Calu3 (cell line): ENCODE measurements at regions of chr6 and their contacts with region 1.

Region 1: GRCh38 chr6:35452186-35453090 is at the start of gene FANCE:
- DNase-seq: peak; percentile 99
- H3K4me3 Mint-ChIP-seq: peak within 1 kb of the TSS; percentile 79
- H3K27ac Mint-ChIP-seq: no peak within 1 kb of the TSS
- H3K4me1 Mint-ChIP-seq: peaks cover 26% of the 10 kb centered on the region
- H3K27me3 Mint-ChIP-seq: peaks cover 27% of the 10 kb centered on the region
- CTCF ChIP-seq: no peak
- total RNA-seq, gene FANCE: 10.4 and 10.9 TPM in 2 replicates

Region 2: DNA sequence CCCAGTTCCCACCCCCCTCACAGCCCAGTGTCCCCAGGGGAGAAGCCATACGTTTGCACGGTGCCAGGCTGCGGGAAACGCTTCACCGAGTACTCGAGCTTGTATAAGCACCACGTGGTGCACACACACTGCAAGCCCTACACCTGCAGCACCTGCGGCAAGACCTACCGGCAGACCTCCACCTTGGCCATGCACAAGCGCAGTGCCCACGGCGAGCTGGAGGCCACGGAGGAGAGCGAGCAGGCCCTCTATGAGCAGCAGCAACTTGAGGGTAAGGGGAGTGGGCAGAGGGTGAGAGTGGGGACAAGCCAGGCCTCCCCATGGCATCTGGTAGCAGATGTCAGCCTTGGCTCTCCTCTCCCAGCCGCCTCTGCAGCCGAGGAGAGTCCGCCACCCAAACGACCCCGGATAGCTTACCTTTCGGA is 159.9 kb before region 1 on chr6:
- CTCF ChIA-PET with region 1: interaction called, 13 read pairs
- intact Hi-C with region 1: loop called (anchors 1 kb)
- DNase-seq: no peak
- H3K4me3 Mint-ChIP-seq: no peak overlapping the region
- H3K27ac Mint-ChIP-seq: no peak overlapping the region
- H3K4me1 Mint-ChIP-seq: no peaks in the 10 kb centered on the region
- H3K27me3 Mint-ChIP-seq: no peaks in the 10 kb centered on the region
- CTCF ChIP-seq: no peak

Region 3: DNA sequence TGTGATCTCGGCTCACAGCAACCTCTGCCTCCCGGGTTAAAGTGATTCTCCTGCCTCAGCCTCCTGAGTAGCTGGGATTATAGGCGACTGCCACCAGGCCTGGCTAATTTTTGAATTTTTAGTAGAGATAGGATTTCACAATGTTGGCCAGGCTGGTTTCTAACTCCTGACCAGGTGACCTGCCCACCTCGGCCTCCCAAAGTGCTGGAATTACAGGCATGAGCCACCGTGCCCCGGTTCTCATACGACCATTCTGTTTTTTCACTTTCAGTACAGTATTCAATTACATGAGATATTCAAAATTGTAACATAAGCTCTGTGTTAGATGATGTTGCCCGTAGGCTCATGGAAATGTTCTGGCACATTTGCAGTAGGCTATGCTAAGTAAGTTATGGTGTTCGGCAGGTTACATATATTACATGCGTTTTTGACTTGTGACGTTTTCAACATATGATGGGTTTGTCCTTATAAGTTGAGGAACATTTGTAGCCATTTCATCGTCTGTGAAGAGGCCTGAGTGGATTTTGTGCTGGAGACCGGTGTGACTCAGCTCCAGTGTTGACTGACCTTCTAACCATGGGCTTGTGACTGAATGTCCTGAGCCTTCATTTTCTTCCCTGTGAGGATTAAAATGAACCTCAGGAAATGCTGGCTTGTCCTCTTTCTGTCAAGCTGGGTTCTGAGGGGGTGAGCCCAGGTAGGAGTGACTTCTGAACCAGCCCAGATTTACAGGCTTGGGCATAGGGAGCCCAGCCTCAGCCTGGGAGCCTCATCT is 97.9 kb before region 1 on chr6:
- CTCF ChIA-PET with region 1: no interaction called
- intact Hi-C with region 1: no loop called
- DNase-seq: no peak
- H3K4me3 Mint-ChIP-seq: no peak overlapping the region
- H3K27ac Mint-ChIP-seq: no peak overlapping the region
- H3K4me1 Mint-ChIP-seq: peaks cover 11% of the 10 kb centered on the region
- H3K27me3 Mint-ChIP-seq: no peaks in the 10 kb centered on the region
- CTCF ChIP-seq: no peak

Region 4: GRCh38 chr6:35391240-35391968 is 61.0 kb before region 1 on chr6:
- CTCF ChIA-PET with region 1: no interaction called
- intact Hi-C with region 1: loop called (anchors 5 kb)
- DNase-seq: peak; percentile 71
- H3K4me3 Mint-ChIP-seq: no peak overlapping the region
- H3K27ac Mint-ChIP-seq: peak overlapping the region; percentile 62
- H3K4me1 Mint-ChIP-seq: peaks cover 67% of the 10 kb centered on the region
- H3K27me3 Mint-ChIP-seq: no peaks in the 10 kb centered on the region
- CTCF ChIP-seq: no peak

Region 5: GRCh38 chr6:35415065-35415991 is 37.1 kb before region 1 on chr6:
- CTCF ChIA-PET with region 1: interaction called, 17 read pairs
- intact Hi-C with region 1: no loop called
- DNase-seq: peak; percentile 77
- H3K4me3 Mint-ChIP-seq: no peak overlapping the region
- H3K27ac Mint-ChIP-seq: no peak overlapping the region
- H3K4me1 Mint-ChIP-seq: peaks cover 13% of the 10 kb centered on the region
- H3K27me3 Mint-ChIP-seq: no peaks in the 10 kb centered on the region
- CTCF ChIP-seq: peak; percentile 74